BJ (cell line): ENCODE measurements at regions of chr4 and their contacts with region 1.

Region 1: DNA sequence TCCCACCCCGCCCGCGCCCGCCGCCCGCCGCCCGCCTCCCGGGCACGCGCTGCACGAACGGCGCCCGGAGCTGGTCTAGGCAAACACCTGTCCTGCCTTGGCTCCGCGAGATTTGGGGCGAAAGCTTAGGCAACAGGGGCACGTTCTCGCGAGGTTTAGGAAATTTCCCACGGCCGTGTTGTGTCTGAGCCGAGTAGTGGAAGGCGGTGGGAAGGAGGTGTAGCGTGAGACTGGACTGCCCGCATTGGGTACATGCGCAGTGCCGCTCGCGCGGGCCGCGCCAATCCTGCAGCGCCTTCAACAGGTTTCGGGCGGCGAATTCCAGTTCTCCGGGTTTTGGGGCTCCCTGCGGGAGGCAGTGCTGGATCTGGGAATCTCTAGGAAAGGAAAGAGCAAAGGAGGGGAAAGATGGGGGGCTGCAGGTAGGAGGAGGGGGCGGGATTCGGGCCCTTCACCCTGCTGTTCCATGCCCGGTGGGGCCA is 1.3 kb upstream of the RBPJ start:
- DNase-seq: peak; percentile 97
- H3K4me3 ChIP-seq: peak overlapping the region; percentile 92
- H3K27me3 ChIP-seq: no peaks in the 10 kb centered on the region
- CTCF ChIP-seq: peak; percentile 20; the same call in 1 of the 2 replicates

Region 2: DNA sequence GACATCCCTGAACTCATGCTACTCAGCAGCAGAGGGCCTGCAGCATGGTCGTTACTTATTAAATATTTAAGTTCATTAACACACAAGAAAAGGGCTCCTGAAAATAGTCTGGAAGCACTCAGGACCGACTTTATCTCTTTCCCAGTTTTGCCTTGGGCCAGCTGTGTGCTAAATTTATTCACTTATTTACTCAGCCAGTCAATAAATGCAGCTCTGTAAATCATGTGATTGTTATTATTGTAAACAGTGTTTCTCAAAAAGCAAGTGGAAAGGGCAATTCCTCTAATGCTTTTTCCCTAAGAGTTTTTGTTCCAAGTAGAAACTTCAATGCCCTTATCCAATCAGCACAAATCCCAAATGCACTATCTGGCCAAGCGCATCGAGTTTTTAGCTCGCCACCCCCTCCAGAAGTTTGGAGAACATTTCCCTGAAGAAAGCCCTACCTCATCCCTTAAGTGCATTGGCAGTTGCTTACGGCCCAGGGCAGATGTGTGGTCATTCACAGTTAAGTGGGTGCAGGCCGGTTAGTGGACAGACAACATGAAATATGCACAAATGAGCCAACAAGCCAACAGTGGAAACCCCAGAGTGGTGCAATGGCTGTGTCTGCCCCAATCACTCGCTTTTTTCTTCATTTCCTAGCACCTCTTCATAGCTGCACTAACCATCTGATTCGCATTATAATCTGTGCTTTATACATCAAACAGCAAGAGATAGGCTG is 279.7 kb before region 1 on chr4:
- CTCF ChIA-PET with region 1: no interaction called
- POLR2A ChIA-PET with region 1: interaction called, 10 read pairs
- DNase-seq: no peak
- H3K4me3 ChIP-seq: no peak overlapping the region
- H3K27me3 ChIP-seq: no peaks in the 10 kb centered on the region
- CTCF ChIP-seq: no peak

Region 3: GRCh38 chr4:26741491-26741871 is 422.0 kb after region 1 on chr4:
- CTCF ChIA-PET with region 1: no interaction called
- POLR2A ChIA-PET with region 1: interaction called, 10 read pairs
- DNase-seq: no peak
- H3K4me3 ChIP-seq: no peak overlapping the region
- H3K27me3 ChIP-seq: no peaks in the 10 kb centered on the region
- CTCF ChIP-seq: no peak